ENCODE measurements at regions of chr19 and their contacts with region 1.

Region 1: DNA sequence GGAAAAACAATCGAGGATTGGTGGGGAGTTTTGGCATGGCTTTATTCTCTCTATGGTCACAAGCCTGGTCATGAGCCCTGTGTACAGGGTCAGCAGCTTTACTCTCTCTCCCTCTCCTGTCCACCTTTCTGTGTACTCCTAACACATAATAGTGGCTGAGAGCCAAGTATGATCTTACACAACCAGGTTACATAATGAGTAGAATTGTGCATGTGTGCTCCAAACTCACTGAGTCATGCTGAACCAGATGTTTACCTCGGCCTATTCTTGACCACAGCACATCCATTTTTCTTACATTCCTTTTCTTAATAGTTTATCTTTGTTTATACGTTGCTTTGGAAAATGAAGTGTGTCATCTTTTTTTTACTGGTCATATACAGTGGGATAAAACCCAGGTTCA is 53.1 kb downstream of the ZNF254 start:
- DNase-seq: no peak
- ATAC-seq: no peak
- H3K4me3 ChIP-seq: no peak overlapping the region
- H3K27ac ChIP-seq: no peak overlapping the region
- H3K4me1 ChIP-seq: no peaks in the 10 kb centered on the region
- H3K27me3 ChIP-seq: no peaks in the 10 kb centered on the region
- CTCF ChIP-seq: no peak

Region 2: DNA sequence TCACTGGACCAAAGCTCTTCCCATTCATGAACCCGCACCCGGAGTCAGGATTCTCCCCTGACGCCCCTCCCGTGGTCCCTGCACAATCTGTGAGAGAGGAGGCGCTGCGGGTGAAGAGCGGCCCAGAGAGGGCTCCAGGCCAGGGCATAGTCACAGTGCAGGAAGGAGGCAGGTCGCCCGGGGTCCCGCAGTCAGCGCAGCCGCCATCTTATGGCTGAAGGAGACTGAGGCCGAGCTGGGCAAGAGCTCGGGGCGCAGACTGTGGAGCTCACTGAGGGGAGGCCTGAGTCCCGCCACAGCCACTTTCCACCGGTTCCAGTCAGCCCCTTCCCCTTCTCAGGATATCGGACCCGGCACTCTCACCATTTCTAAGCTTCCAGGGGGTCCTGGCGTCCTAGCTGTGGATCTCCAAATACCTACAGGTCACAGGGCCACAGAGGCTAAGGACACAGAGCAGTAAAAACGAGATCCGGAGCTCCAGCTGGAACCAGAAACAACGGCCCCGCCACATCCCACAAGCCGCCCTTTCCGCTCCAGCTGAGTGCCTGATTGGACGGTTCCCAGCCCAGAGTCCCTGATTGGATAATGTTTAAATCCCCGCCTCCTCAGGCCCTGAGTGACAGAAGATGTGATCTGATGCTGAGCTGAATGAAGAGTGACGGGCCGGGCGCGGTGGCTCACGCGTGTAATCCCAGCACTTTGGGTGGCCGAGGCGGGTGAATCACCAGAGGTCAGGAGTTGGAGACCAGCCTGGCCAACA is 1356.3 kb before region 1 on chr19 and contains the start of gene ZNF99:
- intact Hi-C with region 1: loop called in 1 of 2 experiments (anchors 5 kb)
- DNase-seq: peak; percentile 47 to 72
- ATAC-seq: peak in 2 of 4 donors; percentile 35 to 55
- H3K4me3 ChIP-seq: peak within 1 kb of the TSS; percentile 42
- H3K27ac ChIP-seq: no peak within 1 kb of the TSS
- H3K4me1 ChIP-seq: no peaks in the 10 kb centered on the region
- H3K27me3 ChIP-seq: peaks cover 0 to 2% (median 0%) of the 10 kb centered on the region in 3 donors
- CTCF ChIP-seq: no peak
- total RNA-seq, gene ZNF99: not detected

Region 3: DNA sequence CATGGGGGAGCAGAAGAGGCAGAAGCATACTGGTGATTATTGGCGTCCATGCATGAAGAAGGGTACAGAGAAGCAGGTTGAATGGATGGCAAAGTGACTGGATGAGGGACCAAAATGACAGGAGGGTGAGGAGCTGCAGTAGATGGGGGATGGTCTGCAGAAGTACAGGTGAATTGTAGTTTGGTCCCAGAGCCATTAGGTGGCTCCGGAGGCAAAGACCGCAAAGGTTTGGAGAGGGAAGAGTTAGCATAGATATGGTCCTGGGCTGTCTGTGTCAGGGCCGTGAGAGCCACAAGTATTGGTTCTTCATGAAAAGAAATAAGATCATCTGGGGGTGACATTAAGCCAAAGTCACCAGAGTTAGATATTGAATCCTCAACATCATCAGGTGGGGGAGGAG is 284.4 kb before region 1 on chr19:
- intact Hi-C with region 1: no loop called
- DNase-seq: no peak
- ATAC-seq: no peak
- H3K4me3 ChIP-seq: no peak overlapping the region
- H3K27ac ChIP-seq: no peak overlapping the region
- H3K4me1 ChIP-seq: no peaks in the 10 kb centered on the region
- H3K27me3 ChIP-seq: no peaks in the 10 kb centered on the region
- CTCF ChIP-seq: no peak